ENCODE measurements at regions of chr17 and their contacts with region 1.

Region 1: DNA sequence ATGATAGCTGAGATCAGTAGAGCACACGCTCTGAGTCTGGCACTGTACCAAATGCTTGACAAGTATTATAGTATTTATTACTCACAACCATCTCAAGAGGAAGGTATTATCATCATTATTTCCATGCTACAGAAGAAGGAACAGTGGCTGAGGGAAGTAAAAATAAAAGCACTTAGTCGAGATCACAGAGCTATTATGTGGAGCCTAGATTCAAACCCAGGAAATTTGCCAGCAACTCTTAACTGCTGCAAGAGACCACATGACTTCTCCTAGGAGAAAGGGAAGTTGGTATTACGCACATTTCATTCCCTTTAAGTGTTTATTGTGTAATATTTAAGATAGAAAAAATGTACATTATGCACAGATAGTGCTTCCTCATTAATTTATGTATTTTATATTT is 1.0 kb upstream of the RHOT1 start:
- H3K4me3 Mint-ChIP-seq: peak overlapping the region; percentile 73
- H3K27ac Mint-ChIP-seq: peak overlapping the region; percentile 91
- H3K4me1 Mint-ChIP-seq: peaks cover 27% of the 10 kb centered on the region
- H3K27me3 Mint-ChIP-seq: no peaks in the 10 kb centered on the region

Region 2: DNA sequence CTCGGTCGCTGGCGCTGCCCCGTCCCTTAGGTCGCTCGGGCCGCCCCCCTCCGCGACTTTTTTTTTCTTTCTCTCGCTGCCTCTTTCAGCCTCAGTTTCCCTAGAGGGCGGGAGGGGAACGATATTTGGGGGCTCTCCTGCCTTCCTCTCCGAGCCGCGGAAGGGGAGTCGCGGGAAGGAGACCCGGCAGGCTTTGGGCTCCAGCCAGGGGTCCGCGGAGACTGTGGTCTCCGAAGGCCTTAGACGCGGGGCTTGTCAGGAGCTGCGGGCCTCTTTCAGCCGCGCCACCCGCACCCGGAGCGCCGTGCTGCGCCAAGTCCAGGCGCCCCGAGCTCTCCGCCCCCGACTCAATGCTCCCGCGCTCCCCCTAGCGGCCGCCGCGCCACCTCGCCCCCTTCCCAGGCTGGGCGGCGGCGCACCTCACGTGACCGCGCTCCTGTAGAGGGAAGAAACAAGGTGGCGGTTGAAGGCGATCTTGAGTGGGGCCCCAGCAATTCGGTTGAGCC is 134.2 kb before region 1 on chr17 and contains the start of gene LRRC37B:
- intact Hi-C with region 1: loop called (anchors 5 kb)
- H3K4me3 Mint-ChIP-seq: peak within 1 kb of the TSS; percentile 90
- H3K27ac Mint-ChIP-seq: peak within 1 kb of the TSS; percentile 84
- H3K4me1 Mint-ChIP-seq: peaks cover 38% of the 10 kb centered on the region
- H3K27me3 Mint-ChIP-seq: peaks cover 11% of the 10 kb centered on the region

Region 3: DNA sequence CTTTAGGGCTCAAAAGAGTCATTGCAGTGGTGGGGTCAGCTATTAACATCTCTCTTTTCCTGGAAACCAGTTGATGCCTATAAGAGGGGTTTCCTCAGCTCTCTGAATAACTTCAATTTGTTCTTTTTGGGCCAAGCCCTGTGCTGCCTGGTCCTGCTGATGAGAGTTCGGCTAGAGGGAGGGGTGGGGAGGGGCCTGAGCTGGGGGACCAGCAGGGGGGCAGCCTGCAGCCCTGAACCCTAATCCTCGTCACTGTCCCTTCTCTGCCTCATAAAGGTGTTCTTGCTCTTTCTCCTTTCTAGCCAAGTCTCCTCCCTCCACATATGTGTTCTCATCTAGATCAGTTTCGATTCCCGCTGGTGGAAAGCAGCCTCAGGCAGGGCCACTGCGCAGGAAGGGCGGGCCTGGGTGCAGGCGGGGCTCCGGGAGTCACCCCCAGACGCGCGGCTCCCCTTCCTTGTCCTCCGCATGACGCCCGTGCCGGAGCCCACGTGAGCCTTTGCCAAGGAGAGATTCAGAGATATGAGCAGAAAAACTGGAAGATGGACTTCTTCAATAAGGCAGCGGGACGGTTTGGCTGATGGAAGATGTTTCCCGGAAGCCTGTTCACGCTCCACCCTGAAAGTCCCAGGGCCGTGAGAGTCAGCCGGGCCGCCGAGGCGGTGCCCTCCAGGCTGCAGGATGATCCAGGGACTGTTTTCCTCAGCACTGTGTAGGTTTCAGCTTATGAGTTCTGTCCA is 13.9 kb before region 1 on chr17:
- intact Hi-C with region 1: loop called (anchors 2 kb)
- H3K4me3 Mint-ChIP-seq: peak overlapping the region; percentile 79
- H3K27ac Mint-ChIP-seq: peak overlapping the region; percentile 91
- H3K4me1 Mint-ChIP-seq: peaks cover 21% of the 10 kb centered on the region
- H3K27me3 Mint-ChIP-seq: no peaks in the 10 kb centered on the region

Region 4: GRCh38 chr17:32191306-32191705 is 50.0 kb after region 1 on chr17:
- intact Hi-C with region 1: no loop called
- H3K4me3 Mint-ChIP-seq: no peak overlapping the region
- H3K27ac Mint-ChIP-seq: no peak overlapping the region
- H3K4me1 Mint-ChIP-seq: no peaks in the 10 kb centered on the region
- H3K27me3 Mint-ChIP-seq: no peaks in the 10 kb centered on the region

Region 5: GRCh38 chr17:32240750-32241149 is 99.5 kb after region 1 on chr17:
- intact Hi-C with region 1: no loop called
- H3K4me3 Mint-ChIP-seq: no peak overlapping the region
- H3K27ac Mint-ChIP-seq: no peak overlapping the region
- H3K4me1 Mint-ChIP-seq: peaks cover 19% of the 10 kb centered on the region
- H3K27me3 Mint-ChIP-seq: no peaks in the 10 kb centered on the region

Region 6: DNA sequence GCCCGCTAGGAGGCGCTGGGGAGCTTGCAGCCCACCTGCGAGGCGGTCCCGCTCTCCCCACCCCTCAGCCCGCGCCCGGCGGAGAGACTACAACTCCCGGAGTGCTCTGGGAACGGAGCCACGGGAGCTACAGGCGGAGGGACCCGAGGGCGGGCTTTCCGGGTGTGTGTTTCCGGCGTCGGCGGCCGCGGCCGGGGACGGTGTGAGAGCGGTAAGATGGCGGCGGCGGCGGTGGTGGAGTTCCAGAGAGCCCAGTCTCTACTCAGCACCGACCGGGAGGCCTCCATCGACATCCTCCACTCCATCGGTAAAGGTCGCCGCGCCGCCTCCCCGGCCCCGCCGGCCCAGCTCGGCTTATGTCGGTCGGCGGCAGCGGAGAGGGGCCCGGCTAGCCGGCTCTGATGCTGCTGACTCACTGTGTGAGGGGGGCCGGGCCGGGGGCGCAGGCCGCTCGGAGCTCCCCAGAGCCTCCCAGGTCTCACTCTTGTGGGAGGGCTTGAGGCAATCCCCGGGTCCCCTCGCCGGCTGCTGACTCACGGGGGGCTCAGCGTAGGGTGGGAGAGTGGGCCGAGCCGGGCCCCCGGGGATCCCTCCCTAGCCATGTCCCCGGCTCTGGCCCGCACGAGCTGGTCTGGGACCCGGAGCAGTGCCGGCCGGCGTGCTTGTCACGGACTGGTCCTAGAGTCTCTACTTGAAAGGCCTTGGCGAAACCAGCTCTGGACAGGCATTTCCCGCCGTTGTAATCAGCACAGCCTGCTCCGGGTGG is 303.2 kb after region 1 on chr17 and contains the start of gene PSMD11:
- intact Hi-C with region 1: no loop called
- H3K4me3 Mint-ChIP-seq: peak within 1 kb of the TSS; percentile 92
- H3K27ac Mint-ChIP-seq: peak within 1 kb of the TSS; percentile 90
- H3K4me1 Mint-ChIP-seq: peaks cover 30% of the 10 kb centered on the region
- H3K27me3 Mint-ChIP-seq: peaks cover 23% of the 10 kb centered on the region

Region 7: GRCh38 chr17:32732900-32733299 is 591.6 kb after region 1 on chr17:
- intact Hi-C with region 1: no loop called
- H3K4me3 Mint-ChIP-seq: no peak overlapping the region
- H3K27ac Mint-ChIP-seq: no peak overlapping the region
- H3K4me1 Mint-ChIP-seq: no peaks in the 10 kb centered on the region
- H3K27me3 Mint-ChIP-seq: no peaks in the 10 kb centered on the region